CD4-positive, alpha-beta T cell (primary cell): ENCODE measurements at regions of chr15 and their contacts with region 1.

Region 1: DNA sequence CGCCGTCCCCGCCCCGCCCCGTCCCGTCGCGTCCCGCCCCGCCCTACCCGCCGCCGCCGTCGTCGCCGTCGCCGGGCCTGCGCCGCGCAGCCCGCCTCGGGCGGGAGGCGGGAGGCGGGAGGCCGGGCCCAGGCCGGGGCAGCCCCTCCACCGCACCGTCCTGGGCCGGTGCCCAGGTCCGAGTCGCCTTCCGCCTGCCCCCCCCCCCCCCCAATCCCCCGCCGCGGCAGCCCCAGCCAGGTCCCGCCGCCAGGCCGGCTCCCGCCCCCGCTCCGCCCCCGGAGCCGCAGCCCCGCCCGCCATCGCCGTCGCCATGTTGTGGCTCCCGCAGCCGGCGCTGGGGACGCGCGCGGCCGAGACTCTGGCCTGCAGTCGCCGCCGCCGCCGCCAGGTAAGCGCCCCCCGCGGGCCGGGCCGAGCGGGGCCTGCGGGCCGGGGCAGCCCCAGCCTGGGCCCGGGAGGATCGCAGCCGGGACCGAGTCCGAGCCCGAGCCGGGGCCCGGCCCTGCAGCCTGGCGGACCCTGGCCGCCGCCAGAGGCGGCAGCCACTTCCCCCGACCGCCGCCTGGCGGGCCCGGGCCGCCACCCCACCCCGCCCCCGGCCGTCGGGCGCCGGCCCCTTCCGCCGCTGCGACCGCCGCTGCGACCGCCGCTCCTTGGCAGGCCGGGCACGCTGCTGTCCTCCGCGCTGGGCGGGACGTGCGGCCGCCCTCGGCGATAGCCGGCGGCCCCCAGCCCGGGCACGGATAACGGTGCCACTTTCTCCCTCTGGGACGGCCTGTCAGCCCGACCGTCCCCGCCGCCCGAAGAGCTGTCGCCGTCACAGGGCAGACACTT is at the start of gene ZNF592:
- DNase-seq: peak; percentile 64 to 92 (median 78)
- ATAC-seq: peak; percentile 65
- H3K4me3 ChIP-seq: peak within 1 kb of the TSS; percentile 94
- H3K4me3 Mint-ChIP-seq: peak within 1 kb of the TSS; percentile 98
- H3K27ac ChIP-seq: peak within 1 kb of the TSS; percentile 75 to 96
- H3K27ac Mint-ChIP-seq: peak within 1 kb of the TSS; percentile 97
- H3K4me1 ChIP-seq: peaks cover 54% of the 10 kb centered on the region
- H3K4me1 Mint-ChIP-seq: peaks cover 70% of the 10 kb centered on the region
- H3K27me3 ChIP-seq: no peaks in the 10 kb centered on the region
- H3K27me3 Mint-ChIP-seq: no peaks in the 10 kb centered on the region
- CTCF ChIP-seq: no peak
- total RNA-seq, gene ZNF592: 37.5 to 38.2 TPM

Region 2: DNA sequence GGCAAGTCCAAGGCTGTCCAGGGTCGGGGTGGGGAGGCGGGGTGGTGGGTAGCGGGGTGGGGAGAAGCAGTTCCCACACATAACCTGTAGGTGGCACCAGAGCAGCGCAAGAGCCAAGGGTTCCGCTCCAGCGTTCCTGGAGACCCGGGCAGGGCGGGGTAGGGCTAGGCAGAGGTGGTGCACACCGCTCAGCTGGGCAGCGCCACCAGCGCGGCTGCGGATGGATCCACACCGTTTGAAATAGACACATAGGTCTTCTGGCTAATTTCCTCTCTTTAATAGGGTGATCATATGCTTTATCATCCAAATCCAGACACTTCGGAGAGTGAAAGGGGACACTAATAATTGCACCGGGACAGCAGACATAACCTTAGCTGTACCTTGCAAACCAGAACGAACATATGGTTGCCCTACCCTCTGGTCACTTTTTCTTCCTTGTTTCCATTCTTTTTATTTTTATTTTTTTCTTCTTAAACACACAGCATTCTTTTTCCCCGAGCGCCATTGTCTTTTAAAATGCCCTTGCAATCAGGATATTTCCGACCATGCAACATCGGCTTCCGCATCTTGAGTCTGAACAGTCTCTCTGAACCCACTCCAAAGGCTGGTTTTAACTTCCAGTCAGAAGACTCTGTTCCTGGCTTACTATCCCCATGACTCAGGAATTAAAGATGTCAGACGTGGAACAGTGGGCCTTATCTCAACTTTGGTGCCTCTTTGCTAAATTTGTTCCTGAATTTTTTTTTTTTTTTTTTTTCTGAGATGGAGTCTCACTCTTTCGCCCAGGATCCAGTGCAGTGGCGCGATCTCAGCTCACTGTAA is 160.2 kb before region 1 on chr15:
- CTCF ChIA-PET with region 1: interaction called, 3 read pairs
- POLR2A ChIA-PET with region 1: no interaction called
- intact Hi-C with region 1: loop called in 1 of 2 experiments (anchors 5 kb)
- DNase-seq: peak; percentile 74 to 91 (median 82)
- ATAC-seq: peak; percentile 100
- H3K4me3 ChIP-seq: no peak overlapping the region
- H3K4me3 Mint-ChIP-seq: no peak overlapping the region
- H3K27ac ChIP-seq: no peak overlapping the region
- H3K27ac Mint-ChIP-seq: no peak overlapping the region
- H3K4me1 ChIP-seq: peaks cover 8% of the 10 kb centered on the region
- H3K4me1 Mint-ChIP-seq: peaks cover 5% of the 10 kb centered on the region
- H3K27me3 ChIP-seq: peaks cover 0 to 3% of the 10 kb centered on the region in 2 experiments
- H3K27me3 Mint-ChIP-seq: no peaks in the 10 kb centered on the region
- CTCF ChIP-seq: peak; percentile 85

Region 3: GRCh38 chr15:84702961-84703482 is 45.5 kb before region 1 on chr15:
- CTCF ChIA-PET with region 1: no interaction called
- POLR2A ChIA-PET with region 1: interaction called, 10 read pairs
- intact Hi-C with region 1: loop called in 1 of 2 experiments (anchors 10 kb)
- DNase-seq: peak in 1 of 14 experiments; percentile 21
- ATAC-seq: no peak
- H3K4me3 ChIP-seq: no peak overlapping the region
- H3K4me3 Mint-ChIP-seq: no peak overlapping the region
- H3K27ac ChIP-seq: no peak overlapping the region
- H3K27ac Mint-ChIP-seq: peak overlapping the region; percentile 63
- H3K4me1 ChIP-seq: peaks cover 39% of the 10 kb centered on the region
- H3K4me1 Mint-ChIP-seq: peaks cover 67% of the 10 kb centered on the region
- H3K27me3 ChIP-seq: no peaks in the 10 kb centered on the region
- H3K27me3 Mint-ChIP-seq: no peaks in the 10 kb centered on the region
- CTCF ChIP-seq: no peak

Region 4: DNA sequence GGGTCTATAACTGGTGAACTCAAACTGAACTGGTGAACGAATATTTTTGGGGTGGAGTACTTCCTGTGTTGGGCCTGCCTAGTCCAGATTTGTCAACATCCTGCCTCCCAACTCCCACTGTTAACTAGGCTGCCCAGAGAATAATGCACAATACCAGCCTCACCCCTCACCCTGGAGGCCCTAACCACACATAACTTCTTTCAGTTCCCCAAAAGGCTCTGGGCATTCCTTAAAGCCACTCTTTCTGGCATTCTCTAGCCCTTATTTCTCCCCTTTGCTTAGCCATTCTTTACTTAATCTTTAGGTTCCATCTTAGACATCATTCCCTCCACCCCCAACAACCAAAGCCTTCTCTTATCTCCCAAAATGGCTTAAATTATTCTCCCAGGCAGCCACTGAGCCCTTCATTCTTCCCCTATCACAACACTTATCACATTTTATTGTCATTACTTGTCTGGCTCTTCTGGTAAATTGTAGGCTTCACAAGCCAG is 23.4 kb before region 1 on chr15:
- CTCF ChIA-PET with region 1: interaction called, 4 read pairs
- POLR2A ChIA-PET with region 1: interaction called, 311 read pairs
- intact Hi-C with region 1: no loop called
- DNase-seq: peak in 7 of 14 experiments; percentile 19 to 87 (median 50)
- ATAC-seq: peak; percentile 79
- H3K4me3 ChIP-seq: peak overlapping the region; percentile 1
- H3K4me3 Mint-ChIP-seq: peak overlapping the region; percentile 63
- H3K27ac ChIP-seq: peak overlapping the region; percentile 44 to 51
- H3K27ac Mint-ChIP-seq: peak overlapping the region; percentile 90
- H3K4me1 ChIP-seq: peaks cover 64% of the 10 kb centered on the region
- H3K4me1 Mint-ChIP-seq: peaks cover 66% of the 10 kb centered on the region
- H3K27me3 ChIP-seq: no peaks in the 10 kb centered on the region
- H3K27me3 Mint-ChIP-seq: no peaks in the 10 kb centered on the region
- CTCF ChIP-seq: no peak

Region 5: DNA sequence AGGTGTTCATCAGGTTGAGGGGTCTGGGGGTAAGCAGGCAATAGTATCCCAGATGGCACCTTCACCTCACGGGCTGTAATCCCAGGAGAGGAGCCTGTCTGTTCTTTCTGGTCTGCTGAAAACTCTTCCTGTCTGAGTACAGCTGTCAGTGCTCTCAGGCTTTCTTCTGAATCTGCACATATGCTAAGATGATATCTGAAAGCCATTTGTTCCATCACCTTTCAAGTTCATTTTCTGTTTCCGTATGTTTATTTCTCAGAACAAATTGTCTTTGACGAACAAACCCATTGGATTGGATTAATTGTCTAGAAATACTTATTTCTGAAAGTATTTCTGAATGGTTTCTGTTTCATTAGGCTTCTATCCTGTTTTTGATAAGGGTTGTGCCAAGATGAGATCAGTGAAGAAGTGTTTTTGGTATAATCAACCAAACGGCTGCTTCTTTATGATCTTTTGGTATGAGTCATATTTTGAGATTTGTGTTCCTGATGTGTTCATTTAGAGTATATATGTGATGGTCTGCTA is 13.2 kb after region 1 on chr15:
- CTCF ChIA-PET with region 1: interaction called, 3 read pairs
- POLR2A ChIA-PET with region 1: interaction called, 5 read pairs
- intact Hi-C with region 1: loop called in 1 of 2 experiments (anchors 2 kb)
- DNase-seq: peak in 2 of 14 experiments; percentile 10 to 19
- ATAC-seq: peak; percentile 81
- H3K4me3 ChIP-seq: no peak overlapping the region
- H3K4me3 Mint-ChIP-seq: no peak overlapping the region
- H3K27ac ChIP-seq: peak overlapping the region in 1 of 2 donors; percentile 54
- H3K27ac Mint-ChIP-seq: no peak overlapping the region
- H3K4me1 ChIP-seq: peaks cover 57% of the 10 kb centered on the region
- H3K4me1 Mint-ChIP-seq: no peaks in the 10 kb centered on the region
- H3K27me3 ChIP-seq: no peaks in the 10 kb centered on the region
- H3K27me3 Mint-ChIP-seq: no peaks in the 10 kb centered on the region
- CTCF ChIP-seq: no peak